ENCODE measurements at regions of chrX and their contacts with region 1.

Region 1: DNA sequence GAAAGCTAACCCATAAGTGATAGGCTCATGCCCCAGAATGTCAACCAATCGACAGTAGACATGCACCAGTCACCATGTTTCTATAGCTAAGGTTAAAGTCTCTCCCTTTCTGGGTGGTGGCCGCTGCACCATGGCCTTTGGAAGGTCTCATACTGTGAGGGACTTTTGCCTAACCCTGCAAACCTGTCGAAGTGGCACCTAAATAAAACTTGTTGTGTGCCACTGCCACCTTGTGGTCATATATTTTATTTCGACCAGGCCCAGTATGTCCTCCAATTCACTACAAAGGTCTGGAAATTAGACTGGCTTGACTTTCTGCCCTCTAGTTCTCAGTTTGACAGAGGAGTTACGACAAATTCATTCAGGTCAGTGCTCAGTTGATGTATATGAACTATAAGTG is 163.1 kb downstream of the SMARCA1 start:
- DNase-seq: peak; percentile 44
- H3K4me3 ChIP-seq: no peak overlapping the region
- H3K27ac ChIP-seq: no peak overlapping the region
- H3K4me1 ChIP-seq: no peaks in the 10 kb centered on the region
- H3K27me3 ChIP-seq: no peaks in the 10 kb centered on the region
- CTCF ChIP-seq: peak; percentile 25 to 38
- POLR2A ChIP-seq: no peak

Region 2: DNA sequence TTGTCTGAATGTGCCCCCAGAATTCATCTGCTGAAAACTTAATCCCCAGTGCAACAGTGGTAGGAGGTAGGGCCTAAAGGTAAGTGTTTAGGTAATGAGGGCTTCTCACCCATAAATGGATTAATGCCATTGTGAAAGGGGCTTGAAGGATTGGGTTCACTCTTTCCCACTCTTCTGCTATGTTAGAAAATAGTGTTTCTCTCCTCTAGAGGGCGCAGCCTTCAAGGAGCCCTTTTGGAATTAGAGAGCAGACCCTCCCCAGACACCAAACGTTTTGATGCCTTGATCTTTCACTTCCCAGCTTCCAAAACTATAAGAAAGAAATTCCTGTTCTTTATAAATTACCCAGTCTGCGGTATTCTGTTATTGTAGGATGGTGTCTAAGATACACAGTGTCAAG is 543.3 kb before region 1 on chrX:
- CTCF ChIA-PET with region 1: no interaction called
- POLR2A ChIA-PET with region 1: no interaction called
- dilution Hi-C with region 1: no loop called
- intact Hi-C with region 1: loop called (anchors 2 kb)
- DNase-seq: no peak
- H3K4me3 ChIP-seq: no peak overlapping the region
- H3K27ac ChIP-seq: no peak overlapping the region
- H3K4me1 ChIP-seq: no peaks in the 10 kb centered on the region
- H3K27me3 ChIP-seq: no peaks in the 10 kb centered on the region
- CTCF ChIP-seq: no peak
- POLR2A ChIP-seq: no peak

Region 3: GRCh38 chrX:129318375-129318774 is 41.8 kb before region 1 on chrX:
- CTCF ChIA-PET with region 1: interaction called, 15 read pairs
- POLR2A ChIA-PET with region 1: no interaction called
- dilution Hi-C with region 1: no loop called
- intact Hi-C with region 1: loop called (anchors 1 kb)
- DNase-seq: peak; percentile 6
- H3K4me3 ChIP-seq: no peak overlapping the region
- H3K27ac ChIP-seq: no peak overlapping the region
- H3K4me1 ChIP-seq: no peaks in the 10 kb centered on the region
- H3K27me3 ChIP-seq: no peaks in the 10 kb centered on the region
- CTCF ChIP-seq: no peak
- POLR2A ChIP-seq: no peak

Region 4: DNA sequence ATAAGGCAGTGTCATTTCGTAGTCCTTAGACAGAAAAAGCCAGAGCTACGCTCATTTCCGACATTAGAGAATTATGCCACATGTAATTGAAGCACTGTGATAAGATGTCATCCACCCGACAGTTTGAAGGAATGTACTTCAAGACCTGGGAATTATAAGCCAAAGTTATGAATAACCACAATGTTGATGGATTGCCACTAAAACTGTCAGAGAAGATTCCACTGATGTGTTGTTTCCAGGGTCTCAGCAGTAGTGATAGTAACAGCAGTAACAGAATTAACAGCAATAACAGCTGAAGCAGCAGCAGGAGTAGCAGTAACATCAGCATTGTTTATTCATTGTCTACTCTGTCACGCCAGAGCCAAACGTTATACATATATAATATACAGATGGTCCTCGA is 836.3 kb after region 1 on chrX:
- CTCF ChIA-PET with region 1: no interaction called
- POLR2A ChIA-PET with region 1: no interaction called
- dilution Hi-C with region 1: no loop called
- intact Hi-C with region 1: no loop called
- DNase-seq: no peak
- H3K4me3 ChIP-seq: no peak overlapping the region
- H3K27ac ChIP-seq: no peak overlapping the region
- H3K4me1 ChIP-seq: no peaks in the 10 kb centered on the region
- H3K27me3 ChIP-seq: no peaks in the 10 kb centered on the region
- CTCF ChIP-seq: no peak
- POLR2A ChIP-seq: no peak

Measured in endothelial cell of umbilical vein (primary cell).